ENCODE measurements at regions of chr1 and their contacts with region 1.

Region 1: GRCh38 chr1:160416369-160416768 is 16.0 kb downstream of the VANGL2 start:
- DNase-seq: peak in 1 of 2 experiments; percentile 57
- H3K4me3 ChIP-seq: no peak overlapping the region
- H3K27ac ChIP-seq: no peak overlapping the region
- H3K4me1 ChIP-seq: no peaks in the 10 kb centered on the region
- H3K27me3 ChIP-seq: 0 out of 2 replicates have a peak, but pooled peaks cover 5% of the 10 kb centered on the region
- CTCF ChIP-seq: peak; percentile 65

Region 2: GRCh38 chr1:160342953-160343869 is 73.2 kb before region 1 on chr1 and contains the starts of genes COPA and NCSTN:
- CTCF ChIA-PET with region 1: interaction called, 8 read pairs
- POLR2A ChIA-PET with region 1: no interaction called
- intact Hi-C with region 1: loop called (anchors 1 kb)
- DNase-seq: peak; percentile 85 to 89
- H3K4me3 ChIP-seq: peak within 1 kb of the TSS; percentile 88
- H3K27ac ChIP-seq: peak within 1 kb of the TSS; percentile 41
- H3K4me1 ChIP-seq: peaks cover 15% of the 10 kb centered on the region
- H3K27me3 ChIP-seq: no peaks in the 10 kb centered on the region
- CTCF ChIP-seq: no peak
- total RNA-seq, gene COPA: 146 and 147 TPM in 2 replicates
- total RNA-seq, gene NCSTN: 54.7 and 55.8 TPM in 2 replicates

Region 3: GRCh38 chr1:160354388-160354985 is 61.9 kb before region 1 on chr1:
- CTCF ChIA-PET with region 1: interaction called, 7 read pairs
- POLR2A ChIA-PET with region 1: no interaction called
- intact Hi-C with region 1: loop called (anchors 1 kb)
- DNase-seq: peak in 1 of 2 experiments; percentile 25
- H3K4me3 ChIP-seq: no peak overlapping the region
- H3K27ac ChIP-seq: no peak overlapping the region
- H3K4me1 ChIP-seq: no peaks in the 10 kb centered on the region
- H3K27me3 ChIP-seq: no peaks in the 10 kb centered on the region
- CTCF ChIP-seq: peak; percentile 58; the same call in 1 of the 2 replicates

Region 4: DNA sequence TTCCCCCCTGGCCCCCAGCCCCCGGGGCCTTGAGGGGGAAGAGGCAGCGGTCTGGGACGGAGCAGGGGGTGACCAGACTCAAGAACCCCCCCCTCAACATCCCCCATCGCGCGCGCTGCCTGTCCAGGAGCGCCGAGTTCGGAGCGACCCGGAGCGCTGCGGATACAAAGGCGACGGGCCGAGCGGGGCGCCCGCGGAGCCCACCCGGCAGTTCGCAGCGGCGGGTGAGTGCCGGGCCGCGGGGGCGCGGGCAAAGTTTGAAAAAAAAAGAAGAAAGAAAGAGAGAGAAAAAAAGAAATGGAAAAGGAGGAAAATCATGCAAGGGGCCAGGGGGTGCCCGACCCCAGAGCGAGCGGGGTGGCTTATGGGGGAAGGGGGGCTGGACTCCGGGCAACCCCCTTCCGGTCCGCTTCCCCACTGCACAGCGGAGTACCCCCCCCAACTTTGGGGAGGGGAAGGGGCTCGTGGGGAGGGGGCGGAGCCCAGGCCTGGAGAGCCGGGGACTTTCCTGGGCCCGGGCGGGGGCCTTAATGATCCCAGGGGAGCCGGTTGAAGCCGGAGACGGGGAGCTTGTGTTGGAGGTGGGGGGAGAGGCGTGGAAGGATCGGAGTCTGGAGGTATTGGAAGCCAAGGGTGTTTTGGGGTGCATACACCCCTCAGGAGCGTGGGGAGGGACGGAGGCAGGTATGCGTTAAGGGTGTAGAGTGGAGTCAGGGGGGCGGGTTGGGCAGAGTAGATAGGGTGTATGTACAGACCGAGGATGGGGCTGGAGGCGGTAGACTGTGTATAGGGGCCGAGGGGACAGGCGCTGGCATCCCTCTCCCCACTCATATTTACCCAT is 15.5 kb before region 1 on chr1:
- CTCF ChIA-PET with region 1: no interaction called
- POLR2A ChIA-PET with region 1: no interaction called
- intact Hi-C with region 1: no loop called
- DNase-seq: no peak
- H3K4me3 ChIP-seq: peak overlapping the region; percentile 53; the same call in 1 of the 2 replicates
- H3K27ac ChIP-seq: no peak overlapping the region
- H3K4me1 ChIP-seq: no peaks in the 10 kb centered on the region
- H3K27me3 ChIP-seq: peaks cover 21% of the 10 kb centered on the region
- CTCF ChIP-seq: no peak

Region 5: GRCh38 chr1:160437432-160438316 is 21.3 kb after region 1 on chr1:
- CTCF ChIA-PET with region 1: no interaction called
- POLR2A ChIA-PET with region 1: interaction called, 14 read pairs
- intact Hi-C with region 1: no loop called
- DNase-seq: no peak
- H3K4me3 ChIP-seq: no peak overlapping the region
- H3K27ac ChIP-seq: no peak overlapping the region
- H3K4me1 ChIP-seq: no peaks in the 10 kb centered on the region
- H3K27me3 ChIP-seq: peaks cover 21% of the 10 kb centered on the region
- CTCF ChIP-seq: no peak

Measured in PC-9 (cell line).